OCI-LY7 (cell line): ENCODE measurements at regions of chr2 and their contacts with region 1.

Region 1: DNA sequence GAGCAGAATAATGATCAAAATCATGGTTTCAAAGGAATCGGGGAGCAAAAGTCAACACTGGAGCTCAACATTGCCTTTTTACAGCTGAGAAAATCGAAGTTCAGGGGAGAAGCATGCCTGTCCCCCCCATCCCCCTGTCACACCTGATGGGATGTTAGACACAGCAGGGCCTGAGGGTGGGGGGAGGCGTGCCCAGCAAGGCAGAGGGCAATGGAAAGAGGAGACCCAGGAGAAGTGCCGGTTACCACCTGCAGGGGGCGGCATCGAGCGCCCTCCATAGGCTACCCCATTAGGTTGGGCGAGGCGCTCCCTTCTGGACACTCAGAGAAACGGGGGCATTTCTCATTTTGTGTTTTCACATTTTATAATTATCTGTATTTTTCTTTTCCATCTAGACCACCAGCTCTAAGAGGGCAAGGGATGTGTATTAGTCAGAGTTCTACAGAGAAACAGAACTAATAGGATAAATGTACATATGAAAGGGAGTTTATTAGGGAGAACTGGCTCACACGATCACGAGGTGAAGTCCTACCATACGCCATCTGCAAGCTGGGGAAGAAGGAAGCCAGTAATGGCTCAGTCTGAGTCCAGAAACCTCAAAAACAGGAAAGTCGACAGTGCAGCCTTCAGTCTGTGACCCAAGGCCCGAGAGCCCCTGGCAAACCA is 271.3 kb downstream of the LRATD1 start:
- DNase-seq: peak; percentile 75
- H3K4me3 ChIP-seq: no peak overlapping the region
- H3K27ac ChIP-seq: no peak overlapping the region
- H3K4me1 ChIP-seq: no peaks in the 10 kb centered on the region
- CTCF ChIP-seq: peak; percentile 99

Region 2: DNA sequence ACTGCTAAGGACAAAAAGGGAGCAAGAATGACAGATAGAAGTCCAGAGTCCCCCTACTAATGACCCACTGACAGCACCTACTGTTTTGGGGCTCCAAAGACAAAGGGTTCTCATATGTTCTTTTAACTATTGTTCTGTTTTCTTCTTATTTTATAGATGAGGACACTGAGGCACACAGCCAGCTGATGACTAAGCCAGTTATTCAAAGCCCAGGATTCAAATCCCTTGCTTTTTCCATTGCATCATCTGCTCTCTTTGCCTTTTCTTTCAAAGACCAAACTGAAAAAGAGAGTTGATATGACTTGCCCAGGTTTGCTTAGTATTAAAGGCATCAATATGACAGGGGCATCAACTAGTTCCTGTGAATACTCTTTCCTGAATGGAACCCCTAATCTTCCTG is 28.4 kb after region 1 on chr2:
- CTCF ChIA-PET with region 1: no interaction called
- POLR2A ChIA-PET with region 1: no interaction called
- intact Hi-C with region 1: loop called (anchors 1 kb)
- DNase-seq: no peak
- H3K4me3 ChIP-seq: no peak overlapping the region
- H3K27ac ChIP-seq: no peak overlapping the region
- H3K4me1 ChIP-seq: no peaks in the 10 kb centered on the region
- CTCF ChIP-seq: no peak

Region 3: DNA sequence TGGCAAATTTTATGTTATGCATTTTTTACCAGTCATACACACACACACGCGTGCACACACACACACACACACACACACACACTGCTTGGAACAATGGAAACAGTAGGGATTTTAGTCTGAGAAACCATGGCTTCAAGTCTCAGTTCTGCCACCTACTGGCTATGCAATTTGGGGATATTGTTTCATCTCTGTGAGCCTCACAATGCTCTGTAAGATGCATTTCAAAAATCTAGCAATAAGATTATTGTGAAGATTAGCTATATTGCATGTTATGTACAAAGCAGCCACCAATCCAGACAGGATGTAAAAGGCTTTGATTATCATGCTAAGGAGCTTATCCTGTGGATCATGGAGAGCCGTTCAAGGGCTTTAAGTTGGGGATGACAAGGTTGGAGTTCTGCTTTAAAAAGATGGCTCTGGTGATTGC is 255.9 kb after region 1 on chr2:
- CTCF ChIA-PET with region 1: no interaction called
- POLR2A ChIA-PET with region 1: no interaction called
- intact Hi-C with region 1: loop called (anchors 10 kb)
- DNase-seq: peak; percentile 60
- H3K4me3 ChIP-seq: no peak overlapping the region
- H3K27ac ChIP-seq: no peak overlapping the region
- H3K4me1 ChIP-seq: peaks cover 7% of the 10 kb centered on the region
- CTCF ChIP-seq: peak; percentile 86

Region 4: DNA sequence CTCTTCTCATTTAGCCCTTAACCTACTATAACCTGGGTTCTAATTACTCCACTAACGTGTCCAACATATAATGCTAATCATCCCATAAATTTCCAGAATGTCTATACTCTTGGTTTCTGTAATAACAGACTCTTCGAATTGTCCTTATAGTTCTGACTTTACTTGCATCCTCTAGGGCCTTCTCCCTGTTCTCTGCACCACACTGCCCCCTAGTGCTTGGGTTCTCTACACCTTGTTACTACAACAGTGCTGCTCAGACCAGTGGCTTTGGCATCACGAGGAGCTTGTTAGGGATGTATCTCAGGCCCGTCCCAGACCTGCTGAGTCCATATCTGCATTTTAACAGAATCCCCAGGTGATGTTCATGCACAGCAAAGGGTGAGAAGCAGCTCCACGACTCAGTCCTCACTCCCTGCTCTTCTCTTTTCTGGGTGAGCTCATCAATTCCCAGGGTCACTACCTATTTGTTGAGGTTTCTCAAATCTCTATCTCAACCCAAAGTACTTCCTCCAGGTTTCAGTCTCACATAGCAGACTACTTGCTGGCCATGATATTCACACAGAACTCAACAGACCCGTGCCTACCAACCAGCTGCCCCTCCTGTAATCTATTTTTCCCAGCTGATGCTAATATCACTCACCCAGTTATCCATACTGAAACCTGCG is 673.4 kb after region 1 on chr2:
- CTCF ChIA-PET with region 1: interaction called, 3 read pairs
- POLR2A ChIA-PET with region 1: no interaction called
- intact Hi-C with region 1: loop called (anchors 2 kb)
- DNase-seq: peak; percentile 87
- H3K4me3 ChIP-seq: no peak overlapping the region
- H3K27ac ChIP-seq: no peak overlapping the region
- H3K4me1 ChIP-seq: peaks cover 2% of the 10 kb centered on the region
- CTCF ChIP-seq: peak; percentile 93